SK-N-SH (cell line): ENCODE measurements at regions of chr6 and their contacts with region 1.

Region 1: GRCh38 chr6:31441365-31442267 is 38.2 kb downstream of the MICA start:
- DNase-seq: peak; percentile 75
- H3K4me3 ChIP-seq: peak overlapping the region in 1 of 2 experiments; percentile 37; a peak in 1 of 4 replicates
- H3K27ac ChIP-seq: no peak overlapping the region
- H3K4me1 ChIP-seq: no peaks in the 10 kb centered on the region; a peak in 1 of 4 replicates
- H3K27me3 ChIP-seq: peaks cover 35% of the 10 kb centered on the region; the same call in 1 of the 2 replicates
- CTCF ChIP-seq: peak; percentile 82
- EP300 ChIP-seq: no peak
- RAD21 ChIP-seq: peak; percentile 68

Region 2: GRCh38 chr6:31399589-31400466 is 41.8 kb before region 1 on chr6:
- CTCF ChIA-PET with region 1: interaction called, 20 read pairs
- POLR2A ChIA-PET with region 1: no interaction called
- DNase-seq: peak; percentile 68
- H3K4me3 ChIP-seq: peak overlapping the region; percentile 54 to 90
- H3K27ac ChIP-seq: peak overlapping the region; percentile 64 to 91; a peak in 3 of 4 replicates
- H3K4me1 ChIP-seq: no peaks in the 10 kb centered on the region; a peak in 1 of 4 replicates
- H3K27me3 ChIP-seq: no peaks in the 10 kb centered on the region
- CTCF ChIP-seq: peak; percentile 94
- EP300 ChIP-seq: no peak
- RAD21 ChIP-seq: peak; percentile 62

Region 3: GRCh38 chr6:31430449-31430848 is 11.2 kb before region 1 on chr6:
- CTCF ChIA-PET with region 1: interaction called, 12 read pairs
- POLR2A ChIA-PET with region 1: no interaction called
- DNase-seq: no peak
- H3K4me3 ChIP-seq: no peak overlapping the region
- H3K27ac ChIP-seq: no peak overlapping the region
- H3K4me1 ChIP-seq: no peaks in the 10 kb centered on the region
- H3K27me3 ChIP-seq: peaks cover 17% of the 10 kb centered on the region; the same call in 1 of the 2 replicates
- CTCF ChIP-seq: no peak
- EP300 ChIP-seq: no peak
- RAD21 ChIP-seq: no peak